ENCODE measurements at regions of chr9 and their contacts with region 1.

Region 1: GRCh38 chr9:2620919-2621679 is 488 bp upstream of the VLDLR start:
- DNase-seq: peak; percentile 44
- H3K4me3 Mint-ChIP-seq: peak overlapping the region; percentile 90
- H3K27ac Mint-ChIP-seq: peak overlapping the region; percentile 93
- H3K4me1 Mint-ChIP-seq: peaks cover 17% of the 10 kb centered on the region
- H3K27me3 Mint-ChIP-seq: peaks cover 26% of the 10 kb centered on the region

Region 2: DNA sequence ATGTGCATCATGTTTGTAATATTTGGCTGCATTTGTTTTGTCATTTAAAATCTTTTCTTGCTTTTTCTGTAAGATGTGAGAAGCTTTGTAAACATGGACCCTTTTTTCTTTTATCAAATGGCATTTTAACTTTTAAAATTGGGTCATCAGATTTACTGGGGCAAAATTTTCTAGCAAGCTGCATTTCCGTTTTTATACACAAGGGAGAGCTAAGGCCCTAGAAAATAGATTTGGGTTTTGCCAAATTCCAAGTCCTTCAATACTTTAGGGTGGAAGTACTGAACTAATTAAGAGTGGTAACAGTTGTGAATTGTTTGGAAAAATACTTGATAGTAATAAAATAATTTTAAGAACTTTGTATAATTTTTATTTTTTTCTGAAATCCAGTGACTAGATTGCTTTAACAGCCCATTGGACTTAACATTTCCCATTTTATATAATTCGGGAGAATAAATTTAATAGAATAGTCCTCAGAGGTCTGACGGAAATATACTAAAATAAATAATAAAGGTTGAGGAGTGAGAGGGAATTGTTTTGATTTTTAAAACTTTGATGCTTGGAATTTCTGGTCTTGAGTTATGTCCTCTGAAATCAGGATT is 488.5 kb before region 1 on chr9:
- intact Hi-C with region 1: loop called (anchors 5 kb)
- DNase-seq: no peak
- H3K4me3 Mint-ChIP-seq: no peak overlapping the region
- H3K27ac Mint-ChIP-seq: no peak overlapping the region
- H3K4me1 Mint-ChIP-seq: peaks cover 4% of the 10 kb centered on the region
- H3K27me3 Mint-ChIP-seq: no peaks in the 10 kb centered on the region

Region 3: DNA sequence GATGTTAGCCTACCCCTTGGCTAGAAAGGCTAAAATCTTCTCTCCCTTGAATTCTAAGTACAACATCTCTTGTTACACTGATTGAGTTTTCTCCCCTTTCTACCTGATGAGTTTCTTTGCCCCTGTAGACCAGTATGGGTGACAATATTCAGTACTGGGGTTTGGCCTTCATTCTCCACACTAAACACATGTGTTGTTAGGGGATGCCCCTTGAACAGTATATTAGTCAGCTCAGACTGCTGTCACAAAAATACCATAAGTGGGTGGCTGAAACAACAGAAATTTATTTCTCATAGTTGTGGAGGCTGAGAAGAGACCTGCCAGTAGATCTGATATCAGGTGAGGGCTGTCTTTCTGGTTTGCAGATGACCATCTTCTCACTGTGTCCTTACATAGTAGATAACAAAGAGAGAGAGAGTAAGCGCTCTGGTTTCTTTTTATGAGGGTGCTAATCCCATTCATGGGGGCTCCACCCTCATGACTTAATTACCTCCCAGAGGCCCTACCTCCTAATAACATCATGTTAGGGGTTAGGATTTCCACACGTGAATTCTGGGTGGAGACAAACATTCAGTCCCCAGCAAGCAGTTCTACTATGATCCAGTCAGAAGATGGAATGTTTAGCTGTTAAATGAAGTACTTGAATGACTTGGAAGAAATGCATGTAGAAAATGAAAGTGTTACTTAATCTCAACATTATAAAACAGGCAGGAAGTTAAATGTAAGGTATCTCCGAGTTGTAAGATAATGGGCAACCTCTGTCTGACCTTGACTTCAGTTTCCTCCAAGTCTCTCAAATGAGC is 18.0 kb after region 1 on chr9:
- intact Hi-C with region 1: loop called (anchors 1 kb)
- DNase-seq: no peak
- H3K4me3 Mint-ChIP-seq: no peak overlapping the region
- H3K27ac Mint-ChIP-seq: peak overlapping the region; percentile 56
- H3K4me1 Mint-ChIP-seq: peaks cover 24% of the 10 kb centered on the region
- H3K27me3 Mint-ChIP-seq: no peaks in the 10 kb centered on the region

Region 4: DNA sequence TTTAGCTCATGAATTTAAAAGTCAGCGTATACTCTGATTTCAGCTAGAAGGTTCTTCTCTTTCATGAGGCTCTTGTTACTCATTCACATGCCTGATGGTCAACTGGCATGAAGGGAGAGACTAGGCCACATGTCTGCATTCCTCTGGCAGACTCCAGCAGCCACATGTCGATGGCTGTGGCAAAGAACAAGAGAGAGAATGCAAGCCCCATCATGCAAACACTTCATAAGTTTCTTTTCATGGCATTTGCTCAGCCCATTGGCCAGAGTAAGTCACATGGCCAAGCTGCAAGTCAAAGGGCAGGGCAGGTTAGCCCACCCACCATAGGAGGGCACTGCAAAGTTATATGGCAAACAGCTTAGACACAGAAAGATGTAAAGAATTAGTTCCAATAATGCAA is 101.6 kb after region 1 on chr9:
- intact Hi-C with region 1: loop called (anchors 2 kb)
- DNase-seq: no peak
- H3K4me3 Mint-ChIP-seq: no peak overlapping the region
- H3K27ac Mint-ChIP-seq: no peak overlapping the region
- H3K4me1 Mint-ChIP-seq: no peaks in the 10 kb centered on the region
- H3K27me3 Mint-ChIP-seq: peaks cover 2% of the 10 kb centered on the region

Region 5: DNA sequence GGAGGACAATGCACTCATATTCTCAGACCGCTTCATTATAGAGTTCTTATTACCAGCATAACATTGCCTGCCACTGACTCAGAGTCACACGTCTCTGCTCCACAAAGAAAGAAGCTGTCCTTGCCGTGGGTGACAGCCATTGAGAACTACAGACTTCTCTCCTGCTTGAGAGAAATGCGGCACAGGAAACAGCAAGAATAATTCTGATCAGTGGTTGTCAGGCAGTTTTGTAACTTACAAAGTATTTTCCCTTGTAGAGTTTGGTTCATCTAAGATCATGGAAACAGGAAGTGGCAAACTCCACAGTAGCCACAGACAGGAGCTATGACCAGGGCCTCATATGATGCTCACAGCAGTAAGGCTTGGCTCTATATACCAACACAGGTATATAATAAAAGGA is 143.3 kb after region 1 on chr9:
- intact Hi-C with region 1: loop called (anchors 2 kb)
- DNase-seq: peak; percentile 45
- H3K4me3 Mint-ChIP-seq: peak overlapping the region; percentile 17
- H3K27ac Mint-ChIP-seq: peak overlapping the region; percentile 89
- H3K4me1 Mint-ChIP-seq: peaks cover 39% of the 10 kb centered on the region
- H3K27me3 Mint-ChIP-seq: no peaks in the 10 kb centered on the region

Region 6: GRCh38 chr9:2849941-2850340 is 228.8 kb after region 1 on chr9:
- intact Hi-C with region 1: loop called (anchors 2 kb)
- DNase-seq: no peak
- H3K4me3 Mint-ChIP-seq: no peak overlapping the region
- H3K27ac Mint-ChIP-seq: no peak overlapping the region
- H3K4me1 Mint-ChIP-seq: peaks cover 7% of the 10 kb centered on the region
- H3K27me3 Mint-ChIP-seq: peaks cover under 1% of the 10 kb centered on the region

Measured in activated T-helper 1 cell treated with anti-CD3 and anti-CD28 coated beads, Interleukin-12 subunit alpha, Interleukin-12 subunit beta, Interleukin-2, Interleukin-4 antibody, amounts not matched to agents 30 ng/mL and 10 ng/mL and 1 ng/mL, durations not matched to agents 14 hours and 24 hours and 36 hours (primary cell).